ENCODE measurements at regions of chr2 and their contacts with region 1.

Region 1: DNA sequence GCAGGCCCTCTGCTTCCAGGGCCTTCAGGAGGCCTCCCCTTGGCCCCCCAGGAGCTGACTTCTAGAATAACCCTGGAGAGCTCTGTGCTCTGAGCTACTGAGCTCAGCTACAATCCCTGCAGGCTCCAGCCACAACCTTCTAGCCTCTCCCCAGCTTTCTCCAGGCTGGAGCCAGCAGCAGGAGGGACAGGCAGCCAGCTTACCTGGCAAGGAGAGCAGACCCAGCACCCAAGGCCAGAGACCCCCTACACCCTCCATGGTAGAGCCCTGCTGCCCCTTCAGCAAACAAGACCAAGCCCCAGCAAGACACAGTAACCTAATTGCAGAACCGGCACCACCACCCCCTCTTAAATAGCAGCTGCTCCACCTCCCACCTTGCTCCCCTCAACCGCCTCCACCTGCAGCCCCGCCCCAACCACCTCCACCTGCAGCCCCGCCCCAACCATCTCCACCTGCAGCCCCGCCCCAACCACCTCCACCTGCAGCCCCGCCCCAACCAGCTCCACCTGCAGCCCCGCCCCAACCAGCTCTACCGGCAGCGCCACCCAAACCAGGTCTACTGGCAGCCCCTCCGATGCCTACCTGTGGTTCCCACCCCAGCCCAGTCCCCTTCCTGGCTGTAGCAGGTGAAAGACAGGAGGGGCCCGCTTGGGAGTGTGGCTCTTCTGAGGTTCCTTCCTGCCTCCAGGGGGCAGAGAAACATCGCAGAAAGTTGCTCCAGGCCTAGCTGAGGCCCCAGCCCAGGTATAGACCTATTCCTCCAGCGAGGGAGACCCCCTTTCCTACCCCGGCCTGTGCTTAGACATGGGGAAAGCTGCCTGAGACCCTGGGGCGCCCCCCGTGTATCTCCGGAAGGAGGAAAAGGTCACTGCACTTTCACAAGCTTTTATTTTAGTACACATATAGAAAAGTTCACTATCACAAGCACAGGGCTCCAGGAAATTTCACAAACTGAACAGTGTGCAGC is at the start of gene ASTL:
- DNase-seq: no peak
- H3K4me3 ChIP-seq: no peak within 1 kb of the TSS
- CTCF ChIP-seq: peak; percentile 68

Region 2: DNA sequence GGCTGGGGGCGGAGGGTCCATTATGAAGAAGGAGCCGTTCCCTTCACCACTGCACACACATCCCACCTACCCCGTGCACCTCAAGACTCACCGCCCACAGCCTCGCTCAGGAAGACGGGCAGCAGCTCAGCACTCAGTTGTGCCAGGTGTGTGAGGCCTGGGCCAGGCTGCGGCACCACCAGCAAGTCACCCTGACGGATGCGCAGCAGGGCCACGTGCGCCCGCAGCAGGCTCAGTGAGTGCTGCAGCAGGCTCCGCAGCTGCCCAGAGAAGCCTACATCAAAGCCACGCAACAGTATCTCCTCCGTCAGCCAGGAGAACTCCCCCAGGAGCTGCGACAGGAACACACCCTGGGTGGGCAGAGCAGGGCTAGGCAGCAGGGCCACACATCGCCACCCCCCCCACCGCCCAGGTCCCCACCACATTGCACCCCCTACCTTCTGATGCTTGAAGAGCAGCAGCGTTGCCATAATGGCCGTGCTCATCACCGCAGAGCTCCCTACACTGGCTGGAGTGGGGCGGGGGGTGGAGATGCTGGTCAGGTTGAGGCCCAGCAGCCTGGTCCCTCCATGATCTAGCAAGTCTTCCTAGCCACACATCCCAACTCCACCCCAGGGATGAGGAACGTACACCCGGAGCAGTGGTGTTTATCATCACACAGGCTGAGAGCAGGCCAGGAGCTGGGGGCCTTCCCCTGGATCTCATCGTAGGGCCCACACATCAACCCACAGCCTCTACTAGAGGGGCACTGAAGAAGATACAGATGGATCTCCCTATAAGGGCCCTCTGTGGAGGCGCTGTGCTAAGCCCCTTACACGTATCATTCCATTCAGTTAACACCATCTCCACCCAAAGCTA is 113.9 kb before region 1 on chr2:
- CTCF ChIA-PET with region 1: interaction called, 15 read pairs
- POLR2A ChIA-PET with region 1: no interaction called
- DNase-seq: no peak
- H3K4me3 ChIP-seq: no peak overlapping the region
- CTCF ChIP-seq: no peak

Region 3: GRCh38 chr2:96116879-96117697 is 21.4 kb before region 1 on chr2:
- CTCF ChIA-PET with region 1: interaction called, 11 read pairs
- POLR2A ChIA-PET with region 1: no interaction called
- DNase-seq: no peak
- H3K4me3 ChIP-seq: peak overlapping the region; percentile 32
- CTCF ChIP-seq: peak; percentile 43

Region 4: DNA sequence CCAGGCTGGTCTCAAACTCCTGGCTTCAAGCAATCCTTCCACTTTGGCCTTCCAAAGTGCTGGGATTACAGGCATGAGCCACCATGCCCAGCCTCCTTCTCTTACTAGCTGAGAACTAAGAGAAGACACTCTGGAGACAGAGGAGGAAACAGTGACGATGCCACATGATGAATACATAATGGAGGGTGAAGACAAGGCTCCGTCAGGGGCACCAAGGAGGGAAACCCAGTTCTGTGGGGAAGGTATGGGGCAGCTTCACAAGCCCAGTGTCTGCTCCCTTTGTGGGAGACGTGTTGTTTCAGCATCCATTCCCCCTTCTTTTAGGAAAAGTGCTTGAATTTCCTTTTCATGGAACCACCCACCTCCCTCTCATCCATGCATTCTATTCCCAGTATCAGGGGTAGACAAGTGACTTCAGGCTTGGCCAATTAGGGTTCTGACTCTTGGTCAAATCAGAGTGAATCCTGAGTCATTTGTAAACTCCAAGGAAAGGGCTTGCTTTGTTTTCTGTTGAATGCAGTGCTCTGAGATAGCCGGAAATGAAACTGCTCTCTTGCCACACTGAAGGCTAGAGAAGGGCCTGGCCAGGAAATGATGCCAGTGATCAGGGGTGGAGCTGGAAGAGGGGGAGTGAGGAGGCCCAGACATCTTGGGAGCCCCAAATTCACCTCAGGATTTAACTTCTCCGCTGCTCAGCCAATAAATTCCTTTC is 103.6 kb after region 1 on chr2:
- CTCF ChIA-PET with region 1: interaction called, 10 read pairs
- POLR2A ChIA-PET with region 1: no interaction called
- DNase-seq: peak; percentile 34
- H3K4me3 ChIP-seq: no peak overlapping the region
- CTCF ChIP-seq: no peak

Region 5: GRCh38 chr2:96260404-96261260 is 122.2 kb after region 1 on chr2:
- CTCF ChIA-PET with region 1: interaction called, 147 read pairs
- POLR2A ChIA-PET with region 1: interaction called, 3 read pairs
- DNase-seq: peak; percentile 37
- H3K4me3 ChIP-seq: no peak overlapping the region
- CTCF ChIP-seq: peak; percentile 27

Region 6: GRCh38 chr2:96265840-96266679 is 127.6 kb after region 1 on chr2 and contains the starts of genes CIAO1 and TMEM127:
- CTCF ChIA-PET with region 1: interaction called, 147 read pairs
- POLR2A ChIA-PET with region 1: interaction called, 3 read pairs
- DNase-seq: peak; percentile 68
- H3K4me3 ChIP-seq: peak within 1 kb of the TSS; percentile 93
- CTCF ChIP-seq: peak; percentile 48

Region 7: GRCh38 chr2:96427917-96428316 is 289.5 kb after region 1 on chr2:
- CTCF ChIA-PET with region 1: no interaction called
- POLR2A ChIA-PET with region 1: no interaction called
- DNase-seq: peak; percentile 28
- H3K4me3 ChIP-seq: no peak overlapping the region
- CTCF ChIP-seq: no peak

Region 8: GRCh38 chr2:96452053-96452452 is 313.6 kb after region 1 on chr2:
- CTCF ChIA-PET with region 1: no interaction called
- POLR2A ChIA-PET with region 1: no interaction called
- DNase-seq: no peak
- H3K4me3 ChIP-seq: no peak overlapping the region
- CTCF ChIP-seq: no peak

Measured in AG04449 (cell line).